ENCODE measurements at regions of chrX and their contacts with region 1.

Region 1: GRCh38 chrX:68462653-68463052 is 29.4 kb upstream of the OPHN1 start:
- DNase-seq: peak in 1 of 6 donors; percentile 1
- ATAC-seq: peak in 3 of 4 donors; percentile 33 to 45 (median 40)
- H3K4me3 ChIP-seq: no peak overlapping the region
- H3K27ac ChIP-seq: no peak overlapping the region
- H3K4me1 ChIP-seq: no peaks in the 10 kb centered on the region
- H3K27me3 ChIP-seq: peaks cover 0 to 4% (median 0%) of the 10 kb centered on the region in 4 donors
- CTCF ChIP-seq: peak in 3 of 4 donors; percentile 15 to 38 (median 30)

Region 2: DNA sequence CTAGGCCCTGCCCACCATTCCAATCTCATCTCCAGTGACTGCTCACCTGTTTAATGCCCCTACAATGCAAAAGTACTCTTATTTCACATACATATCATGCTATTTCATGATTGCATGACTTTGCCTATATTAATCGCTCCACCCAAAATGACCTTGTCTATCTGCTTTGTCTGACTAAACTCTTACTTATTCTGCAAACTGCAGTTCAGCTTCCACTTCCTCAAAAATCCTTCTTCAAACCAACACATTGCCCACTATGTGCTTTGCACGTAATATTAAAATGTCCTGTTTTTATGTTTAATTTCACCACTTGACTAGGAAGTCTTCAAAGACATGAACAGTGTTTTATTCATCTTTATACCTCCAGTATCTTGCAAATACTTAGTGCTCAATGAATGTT is 259.0 kb before region 1 on chrX:
- intact Hi-C with region 1: loop called in 1 of 3 experiments (anchors 10 kb)
- DNase-seq: no peak
- ATAC-seq: no peak
- H3K4me3 ChIP-seq: no peak overlapping the region
- H3K27ac ChIP-seq: no peak overlapping the region
- H3K4me1 ChIP-seq: no peaks in the 10 kb centered on the region
- H3K27me3 ChIP-seq: no peaks in the 10 kb centered on the region
- CTCF ChIP-seq: no peak

Measured in pancreas (tissue), 10 donors.